Activated CD4-positive, alpha-beta T cell treated with anti-CD3 and anti-CD28 coated beads for 36 hours (primary cell): ENCODE measurements at regions of chr4 and their contacts with region 1.

Region 1: DNA sequence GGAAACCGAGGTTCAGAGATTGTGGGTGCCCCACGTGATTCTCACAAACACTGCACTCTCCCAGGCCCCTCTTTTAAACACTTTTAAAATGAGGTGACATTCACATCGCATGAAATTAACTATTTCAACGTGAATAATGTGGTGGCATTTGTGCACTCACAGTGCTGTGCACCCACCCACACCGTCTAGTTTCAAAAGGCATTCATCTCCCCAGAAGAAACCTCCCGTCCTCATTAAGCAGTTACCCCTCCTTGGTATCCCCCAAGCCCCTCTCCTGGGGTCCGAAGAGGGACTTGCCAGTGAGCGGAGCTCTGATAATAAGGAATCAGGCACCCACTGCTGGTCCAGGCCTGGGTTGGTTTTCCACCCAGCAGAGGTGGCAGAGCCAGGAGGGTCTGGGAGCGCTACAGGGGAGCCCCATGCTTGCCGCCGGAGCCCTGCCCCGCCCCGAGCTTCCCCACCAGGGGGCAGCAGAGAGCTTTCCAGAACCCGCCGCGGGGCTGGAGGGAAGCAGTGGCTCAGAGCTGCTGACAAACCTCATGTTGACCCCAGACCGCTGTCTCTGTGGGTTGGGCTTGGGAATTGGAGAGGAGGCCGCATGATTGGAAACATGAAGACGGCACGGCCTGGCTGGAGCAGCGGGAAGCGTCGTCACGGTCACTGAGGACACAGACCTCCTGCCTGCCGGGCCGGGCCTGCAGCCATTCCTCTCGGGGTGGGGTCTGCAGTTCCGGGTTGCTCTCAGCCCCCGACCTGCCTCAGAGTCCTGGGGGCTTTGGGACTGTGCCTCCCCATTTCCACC is 27.5 kb upstream of the HTRA3 start:
- DNase-seq: peak; percentile 90
- ATAC-seq: peak; percentile 93
- H3K4me3 Mint-ChIP-seq: no peak overlapping the region
- H3K27ac Mint-ChIP-seq: no peak overlapping the region
- H3K4me1 Mint-ChIP-seq: peaks cover 3% of the 10 kb centered on the region
- H3K27me3 Mint-ChIP-seq: no peaks in the 10 kb centered on the region

Region 2: GRCh38 chr4:7876201-7876875 is 365.8 kb before region 1 on chr4:
- CTCF ChIA-PET with region 1: no interaction called
- POLR2A ChIA-PET with region 1: no interaction called
- intact Hi-C with region 1: no loop called
- DNase-seq: peak; percentile 53
- ATAC-seq: peak; percentile 75
- H3K4me3 Mint-ChIP-seq: peak overlapping the region; percentile 32
- H3K27ac Mint-ChIP-seq: peak overlapping the region; percentile 77
- H3K4me1 Mint-ChIP-seq: peaks cover 40% of the 10 kb centered on the region
- H3K27me3 Mint-ChIP-seq: no peaks in the 10 kb centered on the region

Region 3: GRCh38 chr4:8176547-8177399 is 65.3 kb before region 1 on chr4:
- CTCF ChIA-PET with region 1: interaction called, 8 read pairs
- POLR2A ChIA-PET with region 1: no interaction called
- intact Hi-C with region 1: loop called (anchors 2 kb)
- DNase-seq: peak; percentile 68
- ATAC-seq: peak; percentile 95
- H3K4me3 Mint-ChIP-seq: no peak overlapping the region
- H3K27ac Mint-ChIP-seq: no peak overlapping the region
- H3K4me1 Mint-ChIP-seq: peaks cover 3% of the 10 kb centered on the region
- H3K27me3 Mint-ChIP-seq: peaks cover 3% of the 10 kb centered on the region

Region 4: GRCh38 chr4:8403173-8403753 is 161.2 kb after region 1 on chr4:
- CTCF ChIA-PET with region 1: interaction called, 16 read pairs
- POLR2A ChIA-PET with region 1: no interaction called
- intact Hi-C with region 1: loop called (anchors 1 kb)
- DNase-seq: peak; percentile 75
- ATAC-seq: peak; percentile 74
- H3K4me3 Mint-ChIP-seq: no peak overlapping the region
- H3K27ac Mint-ChIP-seq: no peak overlapping the region
- H3K4me1 Mint-ChIP-seq: no peaks in the 10 kb centered on the region
- H3K27me3 Mint-ChIP-seq: no peaks in the 10 kb centered on the region

Region 5: GRCh38 chr4:8547108-8547970 is 305.2 kb after region 1 on chr4:
- CTCF ChIA-PET with region 1: no interaction called
- POLR2A ChIA-PET with region 1: no interaction called
- intact Hi-C with region 1: loop called in 1 of 2 experiments (anchors 2 kb)
- DNase-seq: peak; percentile 42
- ATAC-seq: peak; percentile 47
- H3K4me3 Mint-ChIP-seq: no peak overlapping the region
- H3K27ac Mint-ChIP-seq: no peak overlapping the region
- H3K4me1 Mint-ChIP-seq: no peaks in the 10 kb centered on the region
- H3K27me3 Mint-ChIP-seq: no peaks in the 10 kb centered on the region

Region 6: GRCh38 chr4:8594097-8595038 is 352.3 kb after region 1 on chr4:
- CTCF ChIA-PET with region 1: no interaction called
- POLR2A ChIA-PET with region 1: no interaction called
- intact Hi-C with region 1: loop called (anchors 1 to 5 kb)
- DNase-seq: peak; percentile 44
- ATAC-seq: no peak
- H3K4me3 Mint-ChIP-seq: no peak overlapping the region
- H3K27ac Mint-ChIP-seq: no peak overlapping the region
- H3K4me1 Mint-ChIP-seq: no peaks in the 10 kb centered on the region
- H3K27me3 Mint-ChIP-seq: peaks cover 19% of the 10 kb centered on the region

Region 7: GRCh38 chr4:8917868-8918783 is 676.0 kb after region 1 on chr4:
- CTCF ChIA-PET with region 1: no interaction called
- POLR2A ChIA-PET with region 1: no interaction called
- intact Hi-C with region 1: loop called in 1 of 2 experiments (anchors 2 kb)
- DNase-seq: peak; percentile 82
- ATAC-seq: peak; percentile 77
- H3K4me3 Mint-ChIP-seq: no peak overlapping the region
- H3K27ac Mint-ChIP-seq: no peak overlapping the region
- H3K4me1 Mint-ChIP-seq: no peaks in the 10 kb centered on the region
- H3K27me3 Mint-ChIP-seq: peaks cover 6% of the 10 kb centered on the region